HepG2 (cell line): ENCODE measurements at regions of chr5 and their contacts with region 1.

Region 1: GRCh38 chr5:1568201-1568979 is 44.6 kb upstream of the LPCAT1 start:
- DNase-seq: peak; percentile 95
- ATAC-seq: peak; percentile 42
- H3K4me3 ChIP-seq: peak overlapping the region in 1 of 3 experiments; percentile 36; a peak in 2 of 6 replicates
- H3K27ac ChIP-seq: peak overlapping the region; percentile 93
- H3K4me1 ChIP-seq: peaks cover 65% of the 10 kb centered on the region
- H3K27me3 ChIP-seq: no peaks in the 10 kb centered on the region
- CTCF ChIP-seq: no peak
- EP300 ChIP-seq: no peak
- POLR2A ChIP-seq: no peak
- RAD21 ChIP-seq: no peak

Region 2: DNA sequence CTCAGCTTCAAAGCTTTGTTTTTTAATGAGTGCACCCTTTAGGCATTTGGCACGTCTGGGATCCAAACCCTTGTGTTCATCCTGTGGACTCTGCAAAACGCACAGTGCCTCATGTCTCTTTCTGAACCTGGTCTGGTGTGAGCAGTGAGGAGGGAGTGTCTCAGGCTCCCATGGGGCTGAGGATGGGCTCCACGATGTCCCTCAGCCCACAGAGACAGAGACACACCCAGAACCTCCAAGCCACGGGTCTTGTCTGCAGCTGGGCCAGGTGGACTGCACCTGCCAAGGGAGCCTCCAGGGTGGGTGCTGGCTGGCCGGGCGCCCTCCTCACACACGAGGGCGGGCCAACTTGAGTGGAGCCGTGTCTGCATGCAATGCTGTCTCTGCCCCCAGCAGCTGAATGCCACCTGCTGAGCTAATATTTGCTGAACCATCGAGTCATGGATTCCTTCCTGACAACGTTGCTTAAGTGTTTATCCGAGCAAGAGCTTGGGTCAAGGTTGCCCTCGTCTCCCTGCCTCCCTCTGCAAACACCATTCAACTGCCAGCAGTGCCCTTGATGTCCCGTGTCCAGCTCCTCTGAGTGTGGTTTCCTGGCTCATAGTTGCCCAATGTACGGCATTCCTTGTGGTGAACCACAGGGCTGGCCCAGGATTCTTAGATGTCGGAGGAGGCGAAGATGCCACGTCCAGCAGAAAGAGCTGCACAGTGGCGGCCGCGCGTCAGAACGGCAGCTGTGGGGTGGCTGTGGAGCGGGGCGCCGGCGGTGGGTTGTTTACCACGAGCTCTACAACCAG is 13.2 kb before region 1 on chr5:
- CTCF ChIA-PET with region 1: interaction called, 3 read pairs
- POLR2A ChIA-PET with region 1: interaction called, 68 read pairs
- in situ Hi-C with region 1: no loop called
- intact Hi-C with region 1: no loop called
- DNase-seq: peak; percentile 96
- ATAC-seq: peak; percentile 85
- H3K4me3 ChIP-seq: peak overlapping the region in 1 of 3 experiments; percentile 32; a peak in 2 of 6 replicates
- H3K27ac ChIP-seq: peak overlapping the region; percentile 60
- H3K4me1 ChIP-seq: peaks cover 59% of the 10 kb centered on the region
- H3K27me3 ChIP-seq: no peaks in the 10 kb centered on the region
- CTCF ChIP-seq: peak; percentile 39
- EP300 ChIP-seq: peak; percentile 87 to 98
- POLR2A ChIP-seq: peak in 1 of 2 experiments; percentile 44; a peak in 1 of 4 replicates
- RAD21 ChIP-seq: no peak